Activated T-helper 1 cell treated with anti-CD3 and anti-CD28 coated beads, Interleukin-12 subunit alpha, Interleukin-12 subunit beta, Interleukin-2, Interleukin-4 antibody, amounts not matched to agents 30 ng/mL and 10 ng/mL and 1 ng/mL, durations not matched to agents 14 hours and 24 hours and 36 hours (primary cell): ENCODE measurements at regions of chr1 and their contacts with region 1.

Region 1: DNA sequence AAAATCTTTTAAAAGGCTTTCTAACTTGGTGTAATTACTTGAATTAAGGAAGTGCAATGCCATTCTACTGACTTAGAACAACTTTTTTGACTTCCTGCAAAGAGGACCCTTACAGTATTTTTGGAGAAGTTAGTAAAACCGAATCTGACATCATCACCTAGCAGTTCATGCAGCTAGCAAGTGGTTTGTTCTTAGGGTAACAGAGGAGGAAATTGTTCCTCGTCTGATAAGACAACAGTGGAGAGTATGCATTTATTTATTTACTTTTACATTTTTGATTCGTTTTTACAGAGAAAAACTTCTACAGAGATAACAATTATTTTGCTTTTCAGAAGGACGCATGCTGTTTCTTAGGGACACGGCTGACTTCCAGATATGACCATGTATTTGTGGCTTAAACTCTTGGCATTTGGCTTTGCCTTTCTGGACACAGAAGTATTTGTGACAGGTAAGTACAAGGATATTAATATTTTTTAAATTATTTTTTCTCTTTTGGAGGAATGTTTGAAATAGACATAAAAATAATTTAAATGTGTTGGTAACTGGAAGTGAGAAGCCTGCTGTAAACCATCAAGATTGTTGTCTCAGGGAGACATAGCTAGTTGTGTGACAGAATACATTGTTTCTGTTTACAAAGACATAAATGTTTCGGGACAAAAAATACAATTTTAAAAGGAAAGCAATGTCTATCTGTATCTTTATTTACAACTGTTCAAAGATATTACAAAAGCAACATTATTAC is at the start of gene PTPRC:
- DNase-seq: no peak
- H3K4me3 Mint-ChIP-seq: peak within 1 kb of the TSS; percentile 92
- H3K27ac Mint-ChIP-seq: peak within 1 kb of the TSS; percentile 96
- H3K4me1 Mint-ChIP-seq: peaks cover 54% of the 10 kb centered on the region
- H3K27me3 Mint-ChIP-seq: no peaks in the 10 kb centered on the region
- total RNA-seq, gene PTPRC: 512 and 516 TPM in 2 replicates

Region 2: GRCh38 chr1:197761621-197762020 is 877.4 kb before region 1 on chr1:
- intact Hi-C with region 1: no loop called
- DNase-seq: no peak
- H3K4me3 Mint-ChIP-seq: no peak overlapping the region
- H3K27ac Mint-ChIP-seq: no peak overlapping the region
- H3K4me1 Mint-ChIP-seq: peaks cover 16% of the 10 kb centered on the region
- H3K27me3 Mint-ChIP-seq: no peaks in the 10 kb centered on the region

Region 3: GRCh38 chr1:198601936-198602889 is 36.9 kb before region 1 on chr1:
- intact Hi-C with region 1: loop called (anchors 1 kb)
- DNase-seq: no peak
- H3K4me3 Mint-ChIP-seq: no peak overlapping the region
- H3K27ac Mint-ChIP-seq: peak overlapping the region; percentile 62
- H3K4me1 Mint-ChIP-seq: peaks cover 61% of the 10 kb centered on the region
- H3K27me3 Mint-ChIP-seq: no peaks in the 10 kb centered on the region

Region 4: GRCh38 chr1:198612471-198613260 is 26.4 kb before region 1 on chr1:
- intact Hi-C with region 1: loop called (anchors 1 kb)
- DNase-seq: no peak
- H3K4me3 Mint-ChIP-seq: peak overlapping the region; percentile 78
- H3K27ac Mint-ChIP-seq: peak overlapping the region; percentile 88
- H3K4me1 Mint-ChIP-seq: peaks cover 67% of the 10 kb centered on the region
- H3K27me3 Mint-ChIP-seq: no peaks in the 10 kb centered on the region

Region 5: GRCh38 chr1:198651650-198652400 is 12.8 kb after region 1 on chr1:
- intact Hi-C with region 1: loop called (anchors 1 kb)
- DNase-seq: no peak
- H3K4me3 Mint-ChIP-seq: peak overlapping the region; percentile 77
- H3K27ac Mint-ChIP-seq: peak overlapping the region; percentile 86
- H3K4me1 Mint-ChIP-seq: peaks cover 77% of the 10 kb centered on the region
- H3K27me3 Mint-ChIP-seq: no peaks in the 10 kb centered on the region

Region 6: DNA sequence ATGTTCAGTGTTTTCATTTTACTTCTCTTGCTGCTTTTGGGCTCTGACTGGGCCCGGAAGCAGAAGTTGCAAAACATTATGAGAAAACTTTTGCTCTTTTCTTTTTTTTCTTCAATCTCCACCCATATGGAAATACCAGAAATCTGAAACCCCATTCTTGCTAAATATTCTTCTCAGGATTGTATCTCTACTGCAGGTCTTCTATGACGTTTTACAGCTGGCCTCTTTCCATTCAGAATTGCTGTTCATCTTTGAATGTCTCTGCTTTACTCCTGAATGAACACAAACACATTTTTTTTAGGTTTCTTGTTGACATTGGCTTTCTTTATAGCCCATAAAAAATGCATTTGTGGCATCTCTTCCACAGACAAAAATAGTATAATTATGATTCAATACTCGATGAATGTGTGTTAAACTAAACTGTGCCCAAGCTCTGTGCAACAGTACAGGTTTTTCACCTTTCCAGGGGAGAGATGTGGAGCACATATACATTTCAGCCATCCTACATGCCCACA is 18.5 kb after region 1 on chr1:
- intact Hi-C with region 1: loop called (anchors 1 kb)
- DNase-seq: no peak
- H3K4me3 Mint-ChIP-seq: peak overlapping the region; percentile 63
- H3K27ac Mint-ChIP-seq: peak overlapping the region; percentile 84
- H3K4me1 Mint-ChIP-seq: peaks cover 68% of the 10 kb centered on the region
- H3K27me3 Mint-ChIP-seq: no peaks in the 10 kb centered on the region

Region 7: GRCh38 chr1:198669023-198669698 is 30.1 kb after region 1 on chr1:
- intact Hi-C with region 1: loop called (anchors 1 kb)
- DNase-seq: no peak
- H3K4me3 Mint-ChIP-seq: peak overlapping the region; percentile 63
- H3K27ac Mint-ChIP-seq: peak overlapping the region; percentile 93
- H3K4me1 Mint-ChIP-seq: peaks cover 92% of the 10 kb centered on the region
- H3K27me3 Mint-ChIP-seq: no peaks in the 10 kb centered on the region

Region 8: GRCh38 chr1:198734323-198735008 is 95.4 kb after region 1 on chr1:
- intact Hi-C with region 1: loop called (anchors 10 kb)
- DNase-seq: no peak
- H3K4me3 Mint-ChIP-seq: no peak overlapping the region
- H3K27ac Mint-ChIP-seq: peak overlapping the region; percentile 73
- H3K4me1 Mint-ChIP-seq: peaks cover 79% of the 10 kb centered on the region
- H3K27me3 Mint-ChIP-seq: no peaks in the 10 kb centered on the region